AG04450 (cell line): ENCODE measurements at regions of chr6 and their contacts with region 1.

Region 1: DNA sequence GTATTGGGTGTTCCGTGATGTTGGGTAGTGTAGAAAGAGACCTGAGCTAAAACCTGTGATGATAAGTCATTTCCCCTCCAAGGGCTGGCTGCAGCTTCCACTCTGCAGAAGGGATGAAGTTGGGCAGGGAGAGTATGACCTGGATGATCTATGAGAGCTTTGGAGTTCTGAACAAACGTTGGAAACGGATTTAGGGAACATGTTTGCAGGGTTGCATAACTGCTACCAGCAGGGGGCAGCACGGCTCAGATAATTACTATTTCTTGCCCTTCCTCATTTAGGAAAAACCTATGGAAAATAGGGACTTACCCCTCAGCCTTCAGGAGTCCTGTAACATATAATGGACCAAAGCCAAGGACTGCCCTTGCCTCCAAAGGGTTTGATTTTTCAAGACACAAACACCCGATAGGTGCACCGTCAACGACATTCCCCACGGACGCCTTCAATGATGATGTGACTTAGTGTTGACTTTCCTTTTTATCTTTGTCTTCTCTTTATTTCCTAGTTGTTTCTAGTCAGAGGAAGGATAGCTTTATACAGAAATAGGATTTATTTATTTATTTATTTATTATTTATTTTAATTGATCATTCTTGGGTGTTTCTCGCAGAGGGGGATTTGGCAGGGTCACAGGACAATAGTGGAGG is 164.9 kb upstream of the SASH1 start:
- DNase-seq: peak; percentile 30
- H3K4me3 ChIP-seq: no peak overlapping the region
- H3K27ac ChIP-seq: no peak overlapping the region
- H3K27me3 ChIP-seq: no peaks in the 10 kb centered on the region
- CTCF ChIP-seq: peak; percentile 71

Region 2: GRCh38 chr6:147382945-147383554 is 794.7 kb before region 1 on chr6:
- CTCF ChIA-PET with region 1: interaction called, 15 read pairs
- POLR2A ChIA-PET with region 1: no interaction called
- DNase-seq: no peak
- H3K4me3 ChIP-seq: no peak overlapping the region
- H3K27ac ChIP-seq: no peak overlapping the region
- H3K27me3 ChIP-seq: no peaks in the 10 kb centered on the region
- CTCF ChIP-seq: peak; percentile 56

Region 3: DNA sequence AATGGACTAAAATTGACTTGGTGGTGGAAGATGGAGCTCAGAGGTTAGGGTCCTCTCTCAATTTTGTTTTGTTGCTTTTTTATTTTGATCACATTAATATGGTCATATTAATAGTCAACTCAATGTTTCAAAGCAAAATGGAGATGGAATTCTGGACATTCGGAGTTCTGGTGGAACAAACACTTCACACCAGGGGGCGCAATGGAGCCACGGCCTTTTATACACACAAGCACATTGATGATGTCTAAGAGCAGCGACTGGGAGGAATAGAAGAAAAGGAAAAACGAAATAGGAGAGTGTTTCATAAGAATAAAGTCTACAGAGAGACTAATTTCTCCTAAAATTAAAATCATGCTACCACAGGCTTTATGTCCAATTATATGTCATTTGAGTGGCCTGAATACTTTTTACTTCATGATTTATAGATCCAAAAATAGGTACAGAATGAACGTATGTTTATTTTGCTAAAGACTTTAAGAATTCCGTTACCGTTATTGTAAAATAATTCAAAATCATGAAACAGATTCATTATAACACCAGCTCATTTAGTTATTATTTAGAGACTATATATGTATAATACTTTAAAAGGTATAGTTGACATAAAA is 32.7 kb before region 1 on chr6:
- CTCF ChIA-PET with region 1: interaction called, 14 read pairs
- POLR2A ChIA-PET with region 1: no interaction called
- DNase-seq: peak; percentile 36
- H3K4me3 ChIP-seq: no peak overlapping the region
- H3K27ac ChIP-seq: no peak overlapping the region
- H3K27me3 ChIP-seq: no peaks in the 10 kb centered on the region
- CTCF ChIP-seq: peak; percentile 94

Region 4: GRCh38 chr6:148192310-148192709 is 14.6 kb after region 1 on chr6:
- CTCF ChIA-PET with region 1: interaction called, 25 read pairs
- POLR2A ChIA-PET with region 1: no interaction called
- DNase-seq: peak; percentile 79
- H3K4me3 ChIP-seq: no peak overlapping the region
- H3K27ac ChIP-seq: peak overlapping the region; percentile 49
- H3K27me3 ChIP-seq: no peaks in the 10 kb centered on the region
- CTCF ChIP-seq: no peak

Region 5: DNA sequence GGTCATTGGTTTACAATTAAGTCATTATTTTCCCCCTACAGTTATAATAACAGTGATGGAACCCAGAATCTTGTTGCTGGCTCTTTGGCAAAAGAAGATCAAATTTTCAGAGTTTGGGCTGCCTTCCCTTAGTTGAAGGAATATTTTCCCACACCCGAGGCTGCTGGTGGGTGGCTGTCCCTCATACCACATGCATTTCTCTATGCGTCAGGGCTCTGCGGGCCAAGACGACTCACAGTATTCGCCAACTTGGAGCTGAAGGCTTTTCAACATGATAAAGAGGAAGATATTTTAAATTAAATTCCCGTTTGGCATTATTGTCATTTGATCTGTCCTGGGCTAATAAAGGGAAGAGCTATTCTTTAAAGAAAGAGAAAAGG is 62.7 kb after region 1 on chr6:
- CTCF ChIA-PET with region 1: interaction called, 36 read pairs
- POLR2A ChIA-PET with region 1: no interaction called
- DNase-seq: peak; percentile 42
- H3K4me3 ChIP-seq: no peak overlapping the region
- H3K27ac ChIP-seq: peak overlapping the region; percentile 33
- H3K27me3 ChIP-seq: no peaks in the 10 kb centered on the region
- CTCF ChIP-seq: no peak

Region 6: GRCh38 chr6:148257810-148258209 is 80.1 kb after region 1 on chr6:
- CTCF ChIA-PET with region 1: interaction called, 102 read pairs
- POLR2A ChIA-PET with region 1: no interaction called
- DNase-seq: no peak
- H3K4me3 ChIP-seq: no peak overlapping the region
- H3K27ac ChIP-seq: no peak overlapping the region
- H3K27me3 ChIP-seq: no peaks in the 10 kb centered on the region
- CTCF ChIP-seq: no peak

Region 7: GRCh38 chr6:148395583-148396101 is 217.9 kb after region 1 on chr6:
- CTCF ChIA-PET with region 1: no interaction called
- POLR2A ChIA-PET with region 1: no interaction called
- DNase-seq: no peak
- H3K4me3 ChIP-seq: no peak overlapping the region
- H3K27ac ChIP-seq: no peak overlapping the region
- H3K27me3 ChIP-seq: no peaks in the 10 kb centered on the region
- CTCF ChIP-seq: no peak

Region 8: GRCh38 chr6:148464319-148465010 is 286.8 kb after region 1 on chr6:
- CTCF ChIA-PET with region 1: interaction called, 50 read pairs
- POLR2A ChIA-PET with region 1: no interaction called
- DNase-seq: no peak
- H3K4me3 ChIP-seq: no peak overlapping the region
- H3K27ac ChIP-seq: no peak overlapping the region
- H3K27me3 ChIP-seq: no peaks in the 10 kb centered on the region
- CTCF ChIP-seq: peak; percentile 91